Right ventricle myocardium inferior (tissue), 1 donor: ENCODE measurements at regions of chr1 and their contacts with region 1.

Region 1: DNA sequence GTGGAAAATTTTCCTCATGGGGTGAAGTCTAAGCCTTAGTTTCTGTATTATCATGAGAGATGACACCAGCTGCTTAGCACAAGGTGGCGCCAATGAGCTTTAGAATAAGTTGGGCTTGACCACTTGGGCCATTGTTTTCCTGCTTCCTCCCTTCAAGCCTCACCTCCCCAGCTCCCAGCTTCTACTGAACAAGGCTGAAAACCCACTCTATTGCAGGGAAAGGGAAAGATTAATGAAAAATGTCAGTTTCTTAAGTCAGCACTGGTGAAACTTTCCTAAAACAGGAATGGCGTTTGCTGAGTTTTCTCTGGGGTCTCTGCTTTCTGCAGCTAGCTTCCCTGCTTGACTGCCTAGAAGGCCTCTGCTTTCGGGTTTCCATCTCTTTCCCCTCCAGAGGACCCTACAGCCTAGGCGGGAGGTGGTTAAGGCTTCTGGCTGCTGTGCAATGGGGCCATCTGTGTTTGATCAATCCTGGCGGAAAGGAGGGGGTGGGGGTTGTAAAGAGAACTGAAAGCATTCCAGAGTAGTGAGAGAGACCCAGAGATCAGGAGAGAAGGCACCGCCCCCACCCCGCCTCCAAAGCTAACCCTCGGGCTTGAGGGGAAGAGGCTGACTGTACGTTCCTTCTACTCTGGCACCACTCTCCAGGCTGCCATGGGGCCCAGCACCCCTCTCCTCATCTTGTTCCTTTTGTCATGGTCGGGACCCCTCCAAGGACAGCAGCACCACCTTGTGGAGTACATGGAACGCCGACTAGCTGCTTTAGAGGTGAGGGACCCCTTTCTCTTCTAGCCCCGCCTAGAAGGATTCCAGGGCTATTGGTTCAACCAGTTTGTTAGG is at the start of gene OLFML3:
- DNase-seq: peak; percentile 86
- ATAC-seq: peak; percentile 69
- total RNA-seq, gene OLFML3: 13.8 TPM

Region 2: GRCh38 chr1:113830039-113830438 is 149.0 kb before region 1 on chr1:
- intact Hi-C with region 1: loop called (anchors 5 kb)
- DNase-seq: no peak
- ATAC-seq: no peak

Region 3: DNA sequence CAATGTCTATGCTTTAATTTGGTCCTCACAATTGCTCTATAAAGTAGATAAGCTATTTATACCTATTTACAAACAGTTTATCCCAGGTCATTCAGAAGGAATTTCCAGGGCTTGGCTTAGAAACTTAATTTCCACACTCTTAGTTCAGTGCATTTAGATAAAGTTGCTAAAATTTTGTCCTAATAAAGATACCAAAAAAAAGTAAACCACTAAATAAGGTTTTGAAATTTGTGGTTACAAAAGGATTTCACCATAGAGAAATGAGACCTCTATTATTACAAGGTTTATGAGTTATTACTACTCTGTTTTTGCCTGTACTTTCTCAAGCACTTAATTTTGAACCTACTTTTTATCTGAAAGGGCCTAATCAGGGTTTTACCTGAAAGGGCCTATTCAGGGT is 130.0 kb before region 1 on chr1:
- intact Hi-C with region 1: no loop called
- DNase-seq: no peak
- ATAC-seq: no peak

Region 4: DNA sequence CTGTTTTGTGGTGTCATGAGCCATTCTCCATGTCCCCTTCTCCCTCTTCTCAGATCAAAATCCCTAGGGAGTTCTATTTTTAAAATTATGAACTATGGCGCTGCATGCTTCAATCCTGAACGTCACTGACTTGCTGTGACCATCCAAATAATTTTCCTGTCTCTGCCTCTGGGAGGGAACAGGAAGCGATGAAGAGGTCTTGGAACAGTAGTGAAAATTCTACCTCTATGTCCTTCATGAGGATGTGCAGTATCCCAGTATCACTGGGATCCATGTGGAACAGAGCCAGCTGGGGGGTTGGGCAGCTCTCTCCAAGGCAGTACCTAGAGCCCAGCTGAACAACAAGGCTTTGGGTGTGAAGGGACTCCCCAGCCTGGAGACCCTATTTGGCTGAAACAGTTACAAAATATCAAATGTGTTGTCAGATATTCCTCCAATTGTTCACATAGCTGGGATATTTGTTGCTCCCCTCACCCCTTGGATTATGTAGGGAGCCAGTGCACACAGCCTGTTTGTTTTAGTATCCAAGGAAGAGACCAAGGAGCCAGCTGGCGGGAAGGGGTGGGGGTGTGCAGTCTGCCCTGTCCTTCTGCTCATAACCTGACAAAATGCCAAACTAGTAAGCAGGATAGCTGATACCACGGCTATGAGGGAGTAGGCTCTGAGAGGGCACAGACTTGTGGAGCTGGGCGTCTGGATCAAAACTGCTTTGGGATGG is 66.3 kb before region 1 on chr1:
- intact Hi-C with region 1: no loop called
- DNase-seq: no peak
- ATAC-seq: peak; percentile 91

Region 5: GRCh38 chr1:114269539-114269938 is 290.5 kb after region 1 on chr1:
- intact Hi-C with region 1: loop called (anchors 5 kb)
- DNase-seq: no peak
- ATAC-seq: no peak

Region 6: GRCh38 chr1:114282751-114283403 is 303.8 kb after region 1 on chr1:
- intact Hi-C with region 1: loop called (anchors 2 kb)
- DNase-seq: peak; percentile 91
- ATAC-seq: peak; percentile 97